CD4-positive, alpha-beta T cell (primary cell): ENCODE measurements at regions of chr16 and their contacts with region 1.

Region 1: GRCh38 chr16:31179747-31180459 is at the start of gene FUS:
- DNase-seq: peak; percentile 86 to 98 (median 94)
- ATAC-seq: peak; percentile 69
- H3K4me3 ChIP-seq: peak within 1 kb of the TSS; percentile 87
- H3K4me3 Mint-ChIP-seq: peak within 1 kb of the TSS; percentile 97
- H3K27ac ChIP-seq: peak within 1 kb of the TSS; percentile 87 to 97
- H3K27ac Mint-ChIP-seq: peak within 1 kb of the TSS; percentile 95
- H3K4me1 ChIP-seq: peaks cover 67% of the 10 kb centered on the region
- H3K4me1 Mint-ChIP-seq: peaks cover 65% of the 10 kb centered on the region
- H3K27me3 ChIP-seq: no peaks in the 10 kb centered on the region
- H3K27me3 Mint-ChIP-seq: no peaks in the 10 kb centered on the region
- CTCF ChIP-seq: no peak
- total RNA-seq, gene FUS: 699 to 733 TPM

Region 2: DNA sequence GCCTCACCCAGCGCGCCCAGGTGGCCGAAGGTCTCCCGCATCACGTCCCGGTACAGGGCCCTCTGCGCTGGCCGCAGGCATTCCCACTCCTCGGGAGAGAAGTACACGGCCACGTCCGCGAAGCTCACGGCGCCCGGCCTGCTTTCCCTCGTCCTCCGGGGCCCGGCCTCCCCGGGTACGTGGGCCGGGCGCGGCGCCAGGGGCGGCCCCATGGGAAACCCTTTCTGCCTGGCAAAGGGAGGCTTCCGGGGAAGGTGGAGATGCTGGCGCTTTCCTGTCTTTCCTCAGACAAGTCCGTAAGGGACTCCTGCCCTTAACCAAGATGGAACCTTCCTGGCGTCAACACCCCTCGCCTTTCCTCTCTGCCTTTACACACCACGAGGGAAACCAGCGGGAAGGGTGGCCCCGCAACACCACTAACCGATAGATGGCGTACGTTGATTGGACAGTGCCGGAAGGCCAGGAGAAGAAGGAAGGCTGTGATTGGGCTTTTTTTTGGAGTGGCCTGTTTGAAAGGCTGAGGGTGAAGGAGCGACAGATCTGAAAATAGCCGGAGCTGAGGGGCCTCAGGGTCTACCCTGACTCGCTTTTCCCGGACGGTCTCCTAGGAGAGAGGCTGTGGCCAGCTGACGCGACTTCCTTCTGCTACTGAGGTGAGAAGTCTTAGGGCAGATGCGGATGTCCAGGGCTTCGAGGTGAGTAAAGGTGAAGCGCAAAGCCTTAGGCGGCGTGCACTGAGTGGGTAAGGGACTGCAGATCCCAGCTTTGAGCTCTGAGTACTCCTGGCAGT is 594.3 kb before region 1 on chr16 and contains the start of gene ZNF785:
- CTCF ChIA-PET with region 1: no interaction called
- POLR2A ChIA-PET with region 1: no interaction called
- intact Hi-C with region 1: no loop called
- DNase-seq: peak; percentile 81 to 97 (median 87)
- ATAC-seq: peak; percentile 99
- H3K4me3 ChIP-seq: peak within 1 kb of the TSS; percentile 64
- H3K4me3 Mint-ChIP-seq: peak within 1 kb of the TSS; percentile 92
- H3K27ac ChIP-seq: peak within 1 kb of the TSS; percentile 53 to 57
- H3K27ac Mint-ChIP-seq: peak within 1 kb of the TSS; percentile 93
- H3K4me1 ChIP-seq: peaks cover 26% of the 10 kb centered on the region
- H3K4me1 Mint-ChIP-seq: peaks cover 18% of the 10 kb centered on the region
- H3K27me3 ChIP-seq: no peaks in the 10 kb centered on the region
- H3K27me3 Mint-ChIP-seq: no peaks in the 10 kb centered on the region
- CTCF ChIP-seq: no peak
- total RNA-seq, gene ZNF785: 6.6 to 7.7 TPM

Region 3: DNA sequence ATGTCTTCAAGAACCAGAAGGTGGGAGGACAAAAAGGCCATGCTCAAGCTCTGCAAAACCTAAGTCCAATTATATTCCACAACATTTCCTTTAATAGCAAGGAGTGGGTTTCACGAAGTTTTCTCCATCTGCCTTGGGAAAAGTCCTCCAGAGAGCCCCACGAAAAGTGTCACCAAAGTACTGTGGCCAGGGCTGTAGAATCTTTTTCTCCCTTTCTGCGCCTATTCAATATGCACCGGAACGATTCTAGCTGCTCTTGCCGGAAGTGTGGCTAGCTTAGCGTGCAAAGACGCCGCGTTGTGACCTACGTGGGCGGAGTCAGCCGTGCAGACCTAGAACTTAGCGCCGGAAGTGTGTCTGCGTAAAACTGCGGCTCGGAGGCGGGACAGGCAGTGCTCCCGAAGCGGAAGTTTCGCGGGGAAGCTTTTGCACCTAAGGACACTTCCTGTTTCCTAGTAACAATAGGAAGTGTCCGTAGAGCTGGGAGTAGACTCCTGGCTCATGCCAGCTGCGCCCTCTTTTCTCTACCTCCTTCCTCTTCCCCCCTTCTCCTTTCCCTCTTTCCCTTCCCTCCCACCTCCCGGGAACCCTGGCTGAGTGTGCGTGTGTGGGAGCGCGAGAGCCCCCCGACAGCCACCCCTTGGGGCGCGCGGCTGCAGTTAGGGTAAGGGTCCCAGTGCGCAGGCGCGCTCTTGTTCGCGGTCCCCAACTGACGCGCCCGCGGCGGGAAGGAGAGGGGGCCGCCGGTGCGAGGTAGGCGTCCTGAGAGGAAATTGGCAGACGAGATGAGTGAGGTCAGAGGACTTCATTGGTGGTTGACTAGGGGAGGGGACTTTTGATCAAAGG is 105.7 kb before region 1 on chr16 and contains the starts of genes ZNF646 and ZNF668:
- CTCF ChIA-PET with region 1: no interaction called
- POLR2A ChIA-PET with region 1: interaction called, 45 read pairs
- intact Hi-C with region 1: loop called in 1 of 2 experiments (anchors 5 kb)
- DNase-seq: peak; percentile 94 to 100 (median 97)
- ATAC-seq: peak; percentile 81
- H3K4me3 ChIP-seq: peak within 1 kb of the TSS; percentile 96
- H3K4me3 Mint-ChIP-seq: peak within 1 kb of the TSS; percentile 98
- H3K27ac ChIP-seq: peak within 1 kb of the TSS; percentile 93 to 95
- H3K27ac Mint-ChIP-seq: peak within 1 kb of the TSS; percentile 92
- H3K4me1 ChIP-seq: peaks cover 35% of the 10 kb centered on the region
- H3K4me1 Mint-ChIP-seq: peaks cover 34% of the 10 kb centered on the region
- H3K27me3 ChIP-seq: no peaks in the 10 kb centered on the region
- H3K27me3 Mint-ChIP-seq: no peaks in the 10 kb centered on the region
- CTCF ChIP-seq: no peak
- total RNA-seq, gene ZNF646: 14.3 to 16.6 TPM
- total RNA-seq, gene ZNF668: 4.5 to 6.0 TPM

Region 4: GRCh38 chr16:31157136-31157535 is 22.8 kb before region 1 on chr16:
- CTCF ChIA-PET with region 1: interaction called, 3 read pairs
- POLR2A ChIA-PET with region 1: interaction called, 23 read pairs
- intact Hi-C with region 1: loop called in 1 of 2 experiments (anchors 2 kb)
- DNase-seq: peak in 1 of 14 experiments; percentile 33
- ATAC-seq: no peak
- H3K4me3 ChIP-seq: no peak overlapping the region
- H3K4me3 Mint-ChIP-seq: peak overlapping the region; percentile 7
- H3K27ac ChIP-seq: no peak overlapping the region
- H3K27ac Mint-ChIP-seq: no peak overlapping the region
- H3K4me1 ChIP-seq: peaks cover 9% of the 10 kb centered on the region
- H3K4me1 Mint-ChIP-seq: peaks cover 5% of the 10 kb centered on the region
- H3K27me3 ChIP-seq: no peaks in the 10 kb centered on the region
- H3K27me3 Mint-ChIP-seq: no peaks in the 10 kb centered on the region
- CTCF ChIP-seq: no peak

Region 5: GRCh38 chr16:31202414-31203375 is 22.8 kb after region 1 on chr16 and contains the start of gene PYCARD:
- CTCF ChIA-PET with region 1: interaction called, 5 read pairs
- POLR2A ChIA-PET with region 1: interaction called, 119 read pairs
- intact Hi-C with region 1: loop called in 1 of 2 experiments (anchors 2 kb)
- DNase-seq: peak in 7 of 14 experiments; percentile 24 to 64 (median 43)
- ATAC-seq: peak; percentile 27
- H3K4me3 ChIP-seq: peak within 1 kb of the TSS; percentile 92
- H3K4me3 Mint-ChIP-seq: peak within 1 kb of the TSS; percentile 94
- H3K27ac ChIP-seq: peak within 1 kb of the TSS in 1 of 2 donors; percentile 60
- H3K27ac Mint-ChIP-seq: peak within 1 kb of the TSS; percentile 90
- H3K4me1 ChIP-seq: peaks cover 45% of the 10 kb centered on the region
- H3K4me1 Mint-ChIP-seq: peaks cover 53% of the 10 kb centered on the region
- H3K27me3 ChIP-seq: no peaks in the 10 kb centered on the region
- H3K27me3 Mint-ChIP-seq: no peaks in the 10 kb centered on the region
- CTCF ChIP-seq: no peak
- total RNA-seq, gene PYCARD: 8.1 to 8.5 TPM

Region 6: GRCh38 chr16:31421587-31421986 is 241.7 kb after region 1 on chr16:
- CTCF ChIA-PET with region 1: no interaction called
- POLR2A ChIA-PET with region 1: no interaction called
- intact Hi-C with region 1: no loop called
- DNase-seq: peak in 4 of 14 experiments; percentile 16 to 71 (median 35)
- ATAC-seq: no peak
- H3K4me3 ChIP-seq: no peak overlapping the region
- H3K4me3 Mint-ChIP-seq: no peak overlapping the region
- H3K27ac ChIP-seq: no peak overlapping the region
- H3K27ac Mint-ChIP-seq: no peak overlapping the region
- H3K4me1 ChIP-seq: peaks cover 7% of the 10 kb centered on the region
- H3K4me1 Mint-ChIP-seq: no peaks in the 10 kb centered on the region
- H3K27me3 ChIP-seq: no peaks in the 10 kb centered on the region
- H3K27me3 Mint-ChIP-seq: peaks cover 20% of the 10 kb centered on the region
- CTCF ChIP-seq: no peak

Region 7: GRCh38 chr16:31458844-31459721 is 279.2 kb after region 1 on chr16 and contains the start of gene ARMC5:
- CTCF ChIA-PET with region 1: interaction called, 3 read pairs
- POLR2A ChIA-PET with region 1: interaction called, 22 read pairs
- intact Hi-C with region 1: no loop called
- DNase-seq: peak; percentile 91 to 99 (median 95)
- ATAC-seq: peak; percentile 72
- H3K4me3 ChIP-seq: peak within 1 kb of the TSS; percentile 97
- H3K4me3 Mint-ChIP-seq: peak within 1 kb of the TSS; percentile 94
- H3K27ac ChIP-seq: peak within 1 kb of the TSS; percentile 98 to 99
- H3K27ac Mint-ChIP-seq: peak within 1 kb of the TSS; percentile 98
- H3K4me1 ChIP-seq: peaks cover 56% of the 10 kb centered on the region
- H3K4me1 Mint-ChIP-seq: peaks cover 49% of the 10 kb centered on the region
- H3K27me3 ChIP-seq: no peaks in the 10 kb centered on the region
- H3K27me3 Mint-ChIP-seq: no peaks in the 10 kb centered on the region
- CTCF ChIP-seq: peak; percentile 71
- total RNA-seq, gene ARMC5: 8.5 to 10.8 TPM